OCI-LY7 (cell line): ENCODE measurements at regions of chr4 and their contacts with region 1.

Region 1: GRCh38 chr4:113593400-113594230 is 167.9 kb downstream of the CAMK2D start:
- DNase-seq: peak; percentile 60
- H3K4me3 ChIP-seq: peak overlapping the region; percentile 29
- H3K27ac ChIP-seq: peak overlapping the region; percentile 79
- H3K4me1 ChIP-seq: peaks cover 52% of the 10 kb centered on the region
- CTCF ChIP-seq: no peak

Region 2: GRCh38 chr4:113020966-113021365 is 572.6 kb before region 1 on chr4:
- CTCF ChIA-PET with region 1: no interaction called
- POLR2A ChIA-PET with region 1: no interaction called
- intact Hi-C with region 1: no loop called
- DNase-seq: no peak
- H3K4me3 ChIP-seq: no peak overlapping the region
- H3K27ac ChIP-seq: no peak overlapping the region
- H3K4me1 ChIP-seq: no peaks in the 10 kb centered on the region
- CTCF ChIP-seq: no peak

Region 3: GRCh38 chr4:113610537-113610936 is 16.9 kb after region 1 on chr4:
- CTCF ChIA-PET with region 1: no interaction called
- POLR2A ChIA-PET with region 1: interaction called, 13 read pairs
- intact Hi-C with region 1: no loop called
- DNase-seq: no peak
- H3K4me3 ChIP-seq: no peak overlapping the region
- H3K27ac ChIP-seq: no peak overlapping the region
- H3K4me1 ChIP-seq: peaks cover 54% of the 10 kb centered on the region
- CTCF ChIP-seq: no peak